Common myeloid progenitor, CD34-positive (primary cell): ENCODE measurements at regions of chr2 and their contacts with region 1.

Region 1: GRCh38 chr2:177229448-177230242 is 17.1 kb downstream of the HNRNPA3 start:
- DNase-seq: no peak
- H3K4me3 ChIP-seq: no peak overlapping the region
- H3K27ac ChIP-seq: no peak overlapping the region
- H3K4me1 ChIP-seq: peaks cover 0 to 10% (median 4%) of the 10 kb centered on the region in 4 experiments
- H3K27me3 ChIP-seq: no peaks in the 10 kb centered on the region

Region 2: GRCh38 chr2:177239932-177240630 is 10.4 kb after region 1 on chr2:
- CTCF ChIA-PET with region 1: interaction called, 15 read pairs
- POLR2A ChIA-PET with region 1: interaction called, 9 read pairs
- DNase-seq: peak; percentile 83 to 97 (median 95)
- H3K4me3 ChIP-seq: peak overlapping the region in 2 of 7 experiments; percentile 13 to 57
- H3K27ac ChIP-seq: peak overlapping the region in 1 of 2 experiments; percentile 70
- H3K4me1 ChIP-seq: peaks cover 28 to 55% (median 46%) of the 10 kb centered on the region in 4 experiments
- H3K27me3 ChIP-seq: no peaks in the 10 kb centered on the region